ENCODE measurements at regions of chr1 and their contacts with region 1.

Region 1: GRCh38 chr1:220315070-220315839 is 43.0 kb upstream of the RAB3GAP2 start:
- DNase-seq: no peak
- ATAC-seq: no peak
- H3K4me3 ChIP-seq: no peak overlapping the region
- H3K27ac ChIP-seq: no peak overlapping the region
- H3K4me1 ChIP-seq: no peaks in the 10 kb centered on the region
- H3K27me3 ChIP-seq: peaks cover 18% of the 10 kb centered on the region; the same call in 1 of the 2 replicates
- CTCF ChIP-seq: no peak

Region 2: GRCh38 chr1:220828179-220828490 is 512.9 kb after region 1 on chr1:
- CTCF ChIA-PET with region 1: no interaction called
- POLR2A ChIA-PET with region 1: interaction called, 16 read pairs
- intact Hi-C with region 1: no loop called
- DNase-seq: no peak
- ATAC-seq: no peak
- H3K4me3 ChIP-seq: no peak overlapping the region
- H3K27ac ChIP-seq: no peak overlapping the region
- H3K4me1 ChIP-seq: no peaks in the 10 kb centered on the region
- H3K27me3 ChIP-seq: no peaks in the 10 kb centered on the region
- CTCF ChIP-seq: no peak

Measured in PC-3 (cell line).